ENCODE measurements at regions of chr3 and their contacts with region 1.

Region 1: GRCh38 chr3:69181592-69182211 is 59.3 kb upstream of the LMOD3 start:
- DNase-seq: no peak
- ATAC-seq: no peak
- H3K4me3 ChIP-seq: no peak overlapping the region
- H3K4me3 Mint-ChIP-seq: no peak overlapping the region
- H3K27ac ChIP-seq: no peak overlapping the region
- H3K27ac Mint-ChIP-seq: peak overlapping the region in 2 of 9 donors; percentile 12 to 73
- H3K4me1 ChIP-seq: no peaks in the 10 kb centered on the region
- H3K4me1 Mint-ChIP-seq: peaks cover 0 to 20% (median 0%) of the 10 kb centered on the region in 7 donors
- H3K27me3 ChIP-seq: no peaks in the 10 kb centered on the region
- H3K27me3 Mint-ChIP-seq: no peaks in the 10 kb centered on the region

Region 2: DNA sequence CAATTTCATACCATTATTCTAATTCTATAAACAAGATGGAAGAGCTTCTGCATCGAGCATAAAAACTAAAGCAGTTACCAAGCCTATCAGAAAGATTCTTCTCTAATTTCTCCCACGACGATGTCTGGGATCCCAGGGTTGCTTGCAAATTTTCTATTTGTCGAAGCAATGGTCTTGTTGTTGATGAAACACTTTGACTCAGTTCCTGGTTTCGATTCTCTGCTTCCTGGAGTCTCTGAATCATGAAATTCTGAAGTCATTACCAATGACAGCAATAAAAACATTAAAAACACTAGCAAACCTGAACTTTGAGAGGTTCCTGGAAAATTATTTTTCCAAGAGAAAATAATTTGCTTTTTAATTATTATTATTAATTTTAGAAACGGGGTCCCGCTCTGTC is 148.2 kb before region 1 on chr3:
- CTCF ChIA-PET with region 1: no interaction called
- POLR2A ChIA-PET with region 1: no interaction called
- intact Hi-C with region 1: loop called in 1 of 2 experiments (anchors 10 kb)
- DNase-seq: no peak
- ATAC-seq: peak; percentile 50
- H3K4me3 ChIP-seq: no peak overlapping the region
- H3K4me3 Mint-ChIP-seq: no peak overlapping the region
- H3K27ac ChIP-seq: no peak overlapping the region
- H3K27ac Mint-ChIP-seq: peak overlapping the region in 2 of 9 donors; percentile 9 to 52
- H3K4me1 ChIP-seq: no peaks in the 10 kb centered on the region
- H3K4me1 Mint-ChIP-seq: peaks cover 0 to 21% (median 3%) of the 10 kb centered on the region in 7 donors
- H3K27me3 ChIP-seq: no peaks in the 10 kb centered on the region
- H3K27me3 Mint-ChIP-seq: no peaks in the 10 kb centered on the region

Region 3: DNA sequence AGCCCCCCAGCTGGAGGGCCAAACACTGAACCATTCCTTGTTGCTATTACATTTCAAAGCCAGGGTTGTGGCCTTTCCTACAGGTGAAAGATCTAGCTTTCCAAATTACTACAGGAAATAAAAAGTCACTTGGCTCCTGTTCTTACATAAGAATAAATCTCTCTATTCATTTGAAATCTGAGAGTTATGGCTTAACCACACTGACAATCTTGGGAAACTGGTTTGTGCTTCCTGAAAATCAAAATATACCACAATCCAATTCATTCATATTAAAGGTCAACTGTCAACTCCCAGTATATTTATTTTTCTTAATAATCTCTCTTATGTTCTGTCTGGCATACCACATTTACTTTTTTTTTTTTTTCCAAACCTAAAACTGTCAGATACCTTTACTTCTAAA is 44.4 kb after region 1 on chr3:
- CTCF ChIA-PET with region 1: no interaction called
- POLR2A ChIA-PET with region 1: no interaction called
- intact Hi-C with region 1: loop called in 1 of 2 experiments (anchors 5 kb)
- DNase-seq: no peak
- ATAC-seq: no peak
- H3K4me3 ChIP-seq: no peak overlapping the region
- H3K4me3 Mint-ChIP-seq: no peak overlapping the region
- H3K27ac ChIP-seq: no peak overlapping the region
- H3K27ac Mint-ChIP-seq: no peak overlapping the region
- H3K4me1 ChIP-seq: no peaks in the 10 kb centered on the region
- H3K4me1 Mint-ChIP-seq: no peaks in the 10 kb centered on the region
- H3K27me3 ChIP-seq: no peaks in the 10 kb centered on the region
- H3K27me3 Mint-ChIP-seq: no peaks in the 10 kb centered on the region